ENCODE measurements at regions of chr7 and their contacts with region 1.

Region 1: GRCh38 chr7:95511716-95512260 is 26.0 kb downstream of the ASB4 start:
- DNase-seq: no peak
- ATAC-seq: peak; percentile 95
- H3K4me3 ChIP-seq: no peak overlapping the region
- H3K27ac ChIP-seq: no peak overlapping the region
- H3K4me1 ChIP-seq: no peaks in the 10 kb centered on the region
- H3K27me3 ChIP-seq: no peaks in the 10 kb centered on the region
- CTCF ChIP-seq: peak; percentile 78 to 88 (median 83)
- EP300 ChIP-seq: no peak
- POLR2A ChIP-seq: no peak
- RAD21 ChIP-seq: peak; percentile 72

Region 2: DNA sequence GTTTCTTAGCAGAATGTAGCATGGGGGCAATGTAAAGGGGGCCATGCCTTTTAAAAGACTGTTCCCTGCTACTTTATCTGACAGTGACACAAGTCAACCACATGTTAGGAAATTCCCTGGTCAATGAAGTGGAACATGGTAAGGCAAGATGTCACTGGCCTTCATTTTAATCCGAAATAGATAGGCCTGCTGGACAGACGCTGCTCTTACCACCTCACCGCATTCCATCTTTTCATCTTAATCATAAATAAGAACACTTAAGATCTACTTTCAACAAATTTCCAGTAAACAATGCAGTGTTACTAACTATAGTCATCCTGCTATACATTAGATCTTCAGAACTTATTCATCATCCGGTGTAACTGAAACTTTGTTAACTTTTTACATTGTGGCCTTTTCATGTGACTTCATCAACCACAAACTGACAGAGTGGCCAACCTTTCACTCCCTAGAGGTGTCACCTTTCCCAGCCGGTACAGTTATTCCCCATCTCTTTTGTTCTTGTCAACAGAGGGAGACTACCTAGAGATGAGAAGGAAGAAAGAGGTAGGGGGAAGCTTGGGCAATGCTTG is 10.4 kb before region 1 on chr7:
- CTCF ChIA-PET with region 1: interaction called, 82 read pairs
- POLR2A ChIA-PET with region 1: interaction called, 10 read pairs
- RAD21 ChIA-PET with region 1: interaction called, 18 read pairs
- SMC1A ChIA-PET with region 1: interaction called, 32 read pairs
- in situ Hi-C with region 1: no loop called
- intact Hi-C with region 1: no loop called
- DNase-seq: peak; percentile 87
- ATAC-seq: peak; percentile 78
- H3K4me3 ChIP-seq: peak overlapping the region; percentile 34; the same call in 1 of the 2 replicates
- H3K27ac ChIP-seq: peak overlapping the region; percentile 56
- H3K4me1 ChIP-seq: peaks cover 8% of the 10 kb centered on the region
- H3K27me3 ChIP-seq: no peaks in the 10 kb centered on the region
- CTCF ChIP-seq: no peak
- EP300 ChIP-seq: peak; percentile 96 to 97
- POLR2A ChIP-seq: no peak
- RAD21 ChIP-seq: no peak

Region 3: DNA sequence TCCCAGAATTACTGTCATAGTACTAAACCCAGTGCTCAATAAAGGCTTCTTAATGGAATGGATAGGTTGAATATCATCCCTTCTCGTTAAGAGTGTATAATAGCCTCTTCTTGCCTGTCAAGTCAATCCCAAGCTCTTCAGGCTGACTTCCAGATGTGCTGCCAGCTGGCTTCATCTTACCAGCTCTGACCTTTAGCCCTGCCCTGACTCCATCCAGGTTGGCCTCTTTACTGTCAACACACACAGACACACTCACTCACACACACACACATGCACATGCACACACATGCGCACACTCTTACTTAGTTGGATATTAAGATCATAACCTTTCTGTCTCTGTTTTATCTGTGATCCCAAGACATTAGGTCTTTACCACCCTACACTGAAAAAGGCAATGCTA is 23.0 kb after region 1 on chr7:
- CTCF ChIA-PET with region 1: interaction called, 97 read pairs
- POLR2A ChIA-PET with region 1: no interaction called
- RAD21 ChIA-PET with region 1: interaction called, 113 read pairs
- SMC1A ChIA-PET with region 1: interaction called, 41 read pairs
- in situ Hi-C with region 1: no loop called
- intact Hi-C with region 1: no loop called
- DNase-seq: no peak
- ATAC-seq: no peak
- H3K4me3 ChIP-seq: no peak overlapping the region
- H3K27ac ChIP-seq: no peak overlapping the region
- H3K4me1 ChIP-seq: no peaks in the 10 kb centered on the region
- H3K27me3 ChIP-seq: no peaks in the 10 kb centered on the region; a peak in 1 of 4 replicates
- CTCF ChIP-seq: no peak
- EP300 ChIP-seq: no peak
- POLR2A ChIP-seq: no peak
- RAD21 ChIP-seq: no peak

Region 4: DNA sequence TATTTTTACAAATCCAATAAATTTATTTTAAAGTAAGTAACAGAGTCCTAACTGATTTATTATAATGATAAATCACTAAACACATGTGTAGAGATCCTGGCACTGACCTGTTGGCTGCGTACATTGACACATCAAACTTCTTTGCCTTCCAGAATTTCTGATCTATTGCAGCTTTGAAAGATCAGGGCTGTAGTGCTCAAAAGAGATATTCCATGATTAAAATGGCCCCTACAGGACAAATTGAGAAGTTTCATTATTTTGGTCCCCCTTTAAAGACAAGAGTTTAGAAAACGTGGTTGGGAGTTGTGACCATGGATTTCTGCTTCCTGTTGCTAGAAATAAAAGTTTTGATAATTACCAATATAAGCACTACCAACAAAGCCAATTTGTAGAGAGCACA is 172.2 kb after region 1 on chr7:
- CTCF ChIA-PET with region 1: interaction called, 505 read pairs
- POLR2A ChIA-PET with region 1: interaction called, 5 read pairs
- RAD21 ChIA-PET with region 1: interaction called, 288 read pairs
- SMC1A ChIA-PET with region 1: interaction called, 238 read pairs
- in situ Hi-C with region 1: loop called (anchors 5 kb)
- intact Hi-C with region 1: loop called (anchors 1 kb)
- DNase-seq: no peak
- ATAC-seq: peak; percentile 67
- H3K4me3 ChIP-seq: no peak overlapping the region
- H3K27ac ChIP-seq: no peak overlapping the region
- H3K4me1 ChIP-seq: no peaks in the 10 kb centered on the region
- H3K27me3 ChIP-seq: no peaks in the 10 kb centered on the region; a peak in 1 of 4 replicates
- CTCF ChIP-seq: peak; percentile 21 to 37 (median 26); a peak in 3 of 6 replicates
- EP300 ChIP-seq: no peak
- POLR2A ChIP-seq: no peak
- RAD21 ChIP-seq: peak; percentile 52

Region 5: GRCh38 chr7:96004578-96004977 is 492.8 kb after region 1 on chr7:
- CTCF ChIA-PET with region 1: no interaction called
- POLR2A ChIA-PET with region 1: no interaction called
- RAD21 ChIA-PET with region 1: no interaction called
- SMC1A ChIA-PET with region 1: no interaction called
- in situ Hi-C with region 1: no loop called
- intact Hi-C with region 1: no loop called
- DNase-seq: no peak
- ATAC-seq: no peak
- H3K4me3 ChIP-seq: no peak overlapping the region
- H3K27ac ChIP-seq: no peak overlapping the region
- H3K4me1 ChIP-seq: no peaks in the 10 kb centered on the region
- H3K27me3 ChIP-seq: no peaks in the 10 kb centered on the region
- CTCF ChIP-seq: no peak
- EP300 ChIP-seq: no peak
- POLR2A ChIP-seq: no peak
- RAD21 ChIP-seq: no peak